ENCODE measurements at regions of chr1 and their contacts with region 1.

Region 1: DNA sequence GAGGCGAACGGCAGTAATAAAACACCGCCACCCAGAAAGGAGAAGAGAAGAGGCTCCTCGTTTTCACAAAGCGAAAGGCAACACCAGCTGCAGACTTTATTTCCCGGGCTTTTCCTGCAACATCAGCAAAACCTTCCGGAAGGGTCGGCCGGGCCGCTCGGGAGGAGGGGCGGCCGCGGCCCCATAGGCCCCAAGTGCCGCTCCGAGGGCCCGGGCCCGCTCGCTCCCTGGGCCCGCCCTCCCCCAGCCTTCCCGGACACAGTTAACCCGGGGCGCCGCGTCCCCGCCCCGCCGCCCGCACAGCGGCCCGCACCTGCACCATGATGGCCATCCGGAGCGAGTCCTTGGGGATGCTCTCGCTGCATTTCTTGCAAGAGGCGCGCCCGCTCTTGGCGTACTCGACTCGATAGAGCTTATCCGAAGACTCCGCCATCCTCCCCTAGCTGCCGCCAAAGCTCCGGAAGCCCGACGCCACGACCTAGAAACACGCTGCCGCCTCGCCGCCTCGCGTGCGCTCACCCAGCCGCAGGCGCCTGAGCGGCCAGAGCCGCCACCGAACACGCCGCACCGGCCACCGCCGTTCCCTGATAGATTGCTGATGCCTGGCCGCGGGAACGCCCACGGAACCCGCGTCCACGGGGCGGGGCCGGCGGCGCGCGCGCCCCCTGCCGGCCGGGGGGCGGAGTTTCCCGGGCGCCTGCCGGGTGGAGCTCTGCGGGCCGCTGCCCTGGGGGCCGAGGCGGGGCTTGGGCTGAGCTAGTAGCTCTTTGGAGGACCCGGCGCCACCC is at the start of gene PARP1:
- DNase-seq: peak; percentile 95
- ATAC-seq: peak; percentile 83
- H3K4me3 Mint-ChIP-seq: peak within 1 kb of the TSS; percentile 98
- H3K27ac Mint-ChIP-seq: peak within 1 kb of the TSS; percentile 96
- H3K4me1 Mint-ChIP-seq: peaks cover 57% of the 10 kb centered on the region
- H3K27me3 Mint-ChIP-seq: no peaks in the 10 kb centered on the region
- CTCF ChIP-seq: peak; percentile 41
- total RNA-seq, gene PARP1: 232 and 260 TPM in 2 replicates

Region 2: GRCh38 chr1:225999227-225999911 is 408.3 kb before region 1 on chr1 and contains the start of gene SDE2:
- CTCF ChIA-PET with region 1: no interaction called
- POLR2A ChIA-PET with region 1: interaction called, 11 read pairs
- intact Hi-C with region 1: loop called (anchors 5 kb)
- DNase-seq: peak; percentile 99
- ATAC-seq: peak; percentile 82
- H3K4me3 Mint-ChIP-seq: peak within 1 kb of the TSS; percentile 100
- H3K27ac Mint-ChIP-seq: peak within 1 kb of the TSS; percentile 100
- H3K4me1 Mint-ChIP-seq: peaks cover 81% of the 10 kb centered on the region
- H3K27me3 Mint-ChIP-seq: no peaks in the 10 kb centered on the region
- CTCF ChIP-seq: no peak
- total RNA-seq, gene SDE2: 21.1 and 21.8 TPM in 2 replicates

Region 3: DNA sequence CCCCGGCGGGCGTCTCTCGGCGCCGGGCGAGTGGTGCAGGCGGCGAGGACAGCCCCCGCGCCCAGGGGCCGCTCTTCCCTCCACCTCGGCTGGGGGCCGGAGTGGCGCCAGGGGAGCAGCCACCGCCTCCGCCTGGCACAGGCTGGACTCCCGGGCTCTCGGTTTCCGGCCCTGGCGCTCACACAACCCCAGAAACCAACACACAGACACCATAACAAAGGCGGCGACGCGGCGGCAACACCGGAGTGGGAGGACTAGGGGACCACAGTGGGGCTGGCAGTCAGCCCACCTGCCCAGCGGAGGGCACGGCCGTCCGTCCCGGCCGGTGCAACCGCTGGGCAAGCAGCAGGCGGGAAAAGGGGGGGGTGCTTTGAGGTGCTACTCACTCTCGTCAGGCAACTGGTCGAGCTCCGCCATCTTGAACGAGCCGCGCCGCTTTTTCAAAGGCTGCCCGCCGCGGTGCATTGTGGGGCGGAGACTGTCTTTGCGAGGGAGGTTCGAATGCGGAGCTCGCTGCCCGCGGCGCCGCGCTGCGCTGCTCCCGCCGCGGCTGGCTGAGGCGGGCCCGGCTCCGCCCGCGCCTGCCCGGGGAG is 98.9 kb before region 1 on chr1 and contains the start of gene LIN9:
- CTCF ChIA-PET with region 1: interaction called, 8 read pairs
- POLR2A ChIA-PET with region 1: interaction called, 10 read pairs
- intact Hi-C with region 1: loop called (anchors 1 kb)
- DNase-seq: peak; percentile 91
- ATAC-seq: peak; percentile 92
- H3K4me3 Mint-ChIP-seq: peak within 1 kb of the TSS; percentile 92
- H3K27ac Mint-ChIP-seq: peak within 1 kb of the TSS; percentile 65
- H3K4me1 Mint-ChIP-seq: peaks cover 10% of the 10 kb centered on the region
- H3K27me3 Mint-ChIP-seq: peaks cover 4% of the 10 kb centered on the region
- CTCF ChIP-seq: no peak
- total RNA-seq, gene LIN9: 3.5 and 4.5 TPM in 2 replicates

Region 4: GRCh38 chr1:226424228-226425003 is 16.7 kb after region 1 on chr1:
- CTCF ChIA-PET with region 1: interaction called, 14 read pairs
- POLR2A ChIA-PET with region 1: interaction called, 11 read pairs
- intact Hi-C with region 1: loop called (anchors 1 kb)
- DNase-seq: no peak
- ATAC-seq: peak; percentile 53
- H3K4me3 Mint-ChIP-seq: no peak overlapping the region
- H3K27ac Mint-ChIP-seq: peak overlapping the region; percentile 35
- H3K4me1 Mint-ChIP-seq: peaks cover 21% of the 10 kb centered on the region
- H3K27me3 Mint-ChIP-seq: no peaks in the 10 kb centered on the region
- CTCF ChIP-seq: no peak

Region 5: GRCh38 chr1:226662642-226663326 is 255.1 kb after region 1 on chr1:
- CTCF ChIA-PET with region 1: no interaction called
- POLR2A ChIA-PET with region 1: no interaction called
- intact Hi-C with region 1: loop called (anchors 1 kb)
- DNase-seq: peak; percentile 73
- ATAC-seq: peak; percentile 84
- H3K4me3 Mint-ChIP-seq: peak overlapping the region; percentile 56
- H3K27ac Mint-ChIP-seq: peak overlapping the region; percentile 92
- H3K4me1 Mint-ChIP-seq: peaks cover 89% of the 10 kb centered on the region
- H3K27me3 Mint-ChIP-seq: no peaks in the 10 kb centered on the region
- CTCF ChIP-seq: no peak

Region 6: DNA sequence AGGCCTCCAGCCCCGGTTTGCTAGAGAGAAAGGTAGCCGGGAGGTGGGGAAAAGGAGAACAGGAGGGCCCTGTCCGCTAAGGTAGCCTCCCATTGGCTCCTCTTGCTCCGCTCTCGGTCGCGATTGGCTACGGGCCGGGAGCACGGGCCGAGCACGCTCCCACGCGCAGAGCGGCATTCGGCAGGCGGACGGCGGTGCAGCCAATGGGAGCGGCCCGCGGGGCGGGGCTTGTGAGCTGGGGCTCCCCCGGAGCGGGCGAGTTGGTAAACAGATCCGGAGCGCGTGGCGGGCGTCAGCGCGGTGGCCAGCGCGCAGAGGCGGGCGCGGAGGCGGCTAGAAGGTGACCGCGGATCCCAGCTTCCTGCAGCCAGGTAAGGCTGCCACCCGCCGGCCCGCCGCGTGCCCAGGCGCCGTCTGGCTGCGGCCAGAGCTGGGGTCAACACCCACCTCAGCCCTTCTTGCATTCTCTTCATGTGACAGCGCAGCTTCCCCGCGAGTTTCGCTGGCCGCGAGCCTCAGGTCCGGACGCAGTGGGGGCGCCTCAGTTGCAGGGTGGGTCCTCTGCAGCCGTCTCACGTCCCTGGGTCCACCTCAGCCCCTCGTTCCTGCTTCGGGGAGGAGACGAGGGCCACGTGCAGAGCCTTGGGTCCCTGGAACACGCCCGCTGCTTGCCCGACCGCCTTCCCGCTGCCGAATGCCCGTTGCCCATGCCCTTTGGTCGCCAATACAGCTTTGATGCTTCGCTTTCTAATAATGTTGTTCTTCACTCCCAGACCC is 532.5 kb after region 1 on chr1 and contains the start of gene COQ8A:
- CTCF ChIA-PET with region 1: no interaction called
- POLR2A ChIA-PET with region 1: interaction called, 6 read pairs
- intact Hi-C with region 1: loop called (anchors 1 kb)
- DNase-seq: peak; percentile 97
- ATAC-seq: peak; percentile 93
- H3K4me3 Mint-ChIP-seq: peak within 1 kb of the TSS; percentile 89
- H3K27ac Mint-ChIP-seq: peak within 1 kb of the TSS; percentile 96
- H3K4me1 Mint-ChIP-seq: peaks cover 49% of the 10 kb centered on the region
- H3K27me3 Mint-ChIP-seq: no peaks in the 10 kb centered on the region
- CTCF ChIP-seq: no peak
- total RNA-seq, gene COQ8A: 24.7 and 28.5 TPM in 2 replicates

Region 7: DNA sequence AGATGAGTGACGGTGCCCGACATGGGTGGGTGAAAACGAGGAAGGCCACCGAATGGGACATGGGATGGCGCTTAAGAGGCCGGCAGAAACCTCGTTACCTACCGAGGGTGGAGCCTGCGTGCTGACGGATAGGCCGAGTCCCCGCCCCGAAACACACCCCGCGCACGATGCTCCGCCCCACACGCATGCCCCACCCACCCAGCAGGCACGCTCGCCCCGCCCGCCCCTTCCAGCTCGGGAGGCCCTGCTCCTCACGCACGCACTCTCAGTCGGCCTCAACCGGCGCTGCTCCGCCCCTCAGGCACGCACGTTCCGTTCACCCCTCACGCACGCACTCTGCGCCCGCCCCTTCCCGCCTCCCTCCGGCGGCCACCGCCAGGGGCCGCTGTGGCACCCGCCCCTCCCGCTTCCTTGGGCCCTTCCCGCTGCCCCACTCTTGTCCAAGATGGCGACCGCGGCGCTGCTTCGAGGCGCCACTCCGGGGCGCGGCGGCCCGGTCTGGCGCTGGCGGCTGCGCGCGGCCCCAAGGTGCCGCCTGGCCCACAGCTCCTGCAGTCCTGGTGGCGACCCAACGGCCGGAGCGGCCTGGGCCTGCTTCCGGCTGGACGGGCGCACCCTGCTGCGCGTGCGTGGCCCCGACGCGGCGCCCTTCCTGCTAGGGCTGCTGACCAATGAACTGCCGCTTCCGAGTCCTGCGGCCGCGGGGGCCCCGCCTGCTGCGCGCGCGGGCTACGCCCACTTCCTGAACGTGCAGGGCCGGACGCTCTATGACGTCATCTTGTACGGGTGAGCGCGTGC is 1757.9 kb after region 1 on chr1 and contains the start of gene IBA57:
- CTCF ChIA-PET with region 1: no interaction called
- POLR2A ChIA-PET with region 1: no interaction called
- intact Hi-C with region 1: loop called (anchors 5 kb)
- DNase-seq: peak; percentile 100
- ATAC-seq: peak; percentile 85
- H3K4me3 Mint-ChIP-seq: peak within 1 kb of the TSS; percentile 90
- H3K27ac Mint-ChIP-seq: peak within 1 kb of the TSS; percentile 94
- H3K4me1 Mint-ChIP-seq: peaks cover 29% of the 10 kb centered on the region
- H3K27me3 Mint-ChIP-seq: no peaks in the 10 kb centered on the region
- CTCF ChIP-seq: no peak
- total RNA-seq, gene IBA57: 10.8 and 14.5 TPM in 2 replicates